ENCODE measurements at regions of chr1 and their contacts with region 1.

Region 1: GRCh38 chr1:2556277-2556677 is at the start of gene TNFRSF14:
- DNase-seq: no peak
- ATAC-seq: peak; percentile 38
- H3K4me3 ChIP-seq: peak within 1 kb of the TSS; percentile 71 to 89 (median 76)
- H3K27ac ChIP-seq: peak within 1 kb of the TSS; percentile 66
- H3K4me1 ChIP-seq: peaks cover 36% of the 10 kb centered on the region
- H3K27me3 ChIP-seq: no peaks in the 10 kb centered on the region; a peak in 1 of 5 replicates
- CTCF ChIP-seq: no peak
- EP300 ChIP-seq: no peak
- POLR2A ChIP-seq: no peak
- RAD21 ChIP-seq: no peak
- total RNA-seq, gene TNFRSF14: 6.2 and 11.9 TPM in 2 replicates

Region 2: DNA sequence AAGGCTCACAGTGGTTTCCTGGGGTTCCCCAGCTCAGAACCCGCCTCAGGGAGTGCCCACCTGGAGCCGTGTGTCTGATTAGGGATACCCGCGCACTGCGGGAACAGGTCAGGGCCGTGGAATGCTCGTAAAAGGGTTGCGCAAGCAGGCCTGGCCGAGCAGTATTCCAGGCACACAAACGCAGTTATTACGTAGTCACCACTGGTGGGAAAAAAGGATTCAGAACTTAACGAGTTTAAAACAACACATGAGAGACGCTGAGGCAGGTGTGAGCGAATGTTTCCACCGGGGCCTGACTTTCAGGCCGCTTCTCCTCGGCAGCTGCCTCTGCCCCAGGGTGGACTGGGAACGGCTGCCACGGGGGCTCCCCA is 62.0 kb before region 1 on chr1:
- CTCF ChIA-PET with region 1: no interaction called
- POLR2A ChIA-PET with region 1: no interaction called
- in situ Hi-C with region 1: no loop called
- intact Hi-C with region 1: no loop called
- DNase-seq: peak; percentile 28
- ATAC-seq: peak; percentile 17; the same call in 2 of the 3 replicates
- H3K4me3 ChIP-seq: no peak overlapping the region
- H3K27ac ChIP-seq: no peak overlapping the region
- H3K4me1 ChIP-seq: peaks cover 32% of the 10 kb centered on the region
- H3K27me3 ChIP-seq: peaks cover 41 to 79% of the 10 kb centered on the region in 2 experiments
- CTCF ChIP-seq: no peak
- EP300 ChIP-seq: no peak
- POLR2A ChIP-seq: no peak
- RAD21 ChIP-seq: no peak

Region 3: GRCh38 chr1:2545759-2546514 is 10.3 kb before region 1 on chr1:
- CTCF ChIA-PET with region 1: no interaction called
- POLR2A ChIA-PET with region 1: interaction called, 20 read pairs
- in situ Hi-C with region 1: no loop called
- intact Hi-C with region 1: no loop called
- DNase-seq: peak; percentile 87
- ATAC-seq: peak; percentile 62
- H3K4me3 ChIP-seq: peak overlapping the region; percentile 61 to 80 (median 64)
- H3K27ac ChIP-seq: peak overlapping the region; percentile 51
- H3K4me1 ChIP-seq: peaks cover 77% of the 10 kb centered on the region
- H3K27me3 ChIP-seq: peaks cover 4 to 6% of the 10 kb centered on the region in 2 experiments; a peak in 2 of 5 replicates
- CTCF ChIP-seq: no peak
- EP300 ChIP-seq: no peak
- POLR2A ChIP-seq: peak in 1 of 2 experiments; percentile 54; a peak in 2 of 4 replicates
- RAD21 ChIP-seq: no peak

Region 4: DNA sequence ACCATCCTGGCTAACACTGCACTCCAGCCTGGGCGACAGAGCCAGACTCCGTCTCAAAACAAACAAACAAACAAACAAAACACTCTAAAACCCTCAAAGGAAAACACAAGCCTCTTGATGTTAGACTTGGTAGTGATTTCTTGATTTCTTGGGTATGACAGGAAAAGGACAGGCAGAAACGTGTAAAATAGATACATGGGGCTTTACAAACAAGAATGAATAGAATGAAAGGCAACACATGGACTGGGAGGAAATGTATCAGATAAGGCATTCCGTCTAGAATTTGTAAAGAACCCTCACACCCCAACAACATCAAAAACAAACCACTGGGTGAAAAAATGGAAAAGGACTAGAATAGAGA is 22.5 kb after region 1 on chr1:
- CTCF ChIA-PET with region 1: interaction called, 3 read pairs
- POLR2A ChIA-PET with region 1: interaction called, 12 read pairs
- in situ Hi-C with region 1: no loop called
- intact Hi-C with region 1: no loop called
- DNase-seq: no peak
- ATAC-seq: no peak
- H3K4me3 ChIP-seq: no peak overlapping the region; a peak in 1 of 6 replicates
- H3K27ac ChIP-seq: peak overlapping the region; percentile 54
- H3K4me1 ChIP-seq: peaks cover 92% of the 10 kb centered on the region
- H3K27me3 ChIP-seq: no peaks in the 10 kb centered on the region
- CTCF ChIP-seq: no peak
- EP300 ChIP-seq: no peak
- POLR2A ChIP-seq: no peak
- RAD21 ChIP-seq: no peak

Region 5: GRCh38 chr1:2586154-2587070 is 30.1 kb after region 1 on chr1 and contains the start of gene PRXL2B:
- CTCF ChIA-PET with region 1: no interaction called
- POLR2A ChIA-PET with region 1: interaction called, 16 read pairs
- in situ Hi-C with region 1: no loop called
- intact Hi-C with region 1: no loop called
- DNase-seq: peak; percentile 94
- ATAC-seq: peak; percentile 90
- H3K4me3 ChIP-seq: peak within 1 kb of the TSS; percentile 79 to 95 (median 90)
- H3K27ac ChIP-seq: peak within 1 kb of the TSS; percentile 86
- H3K4me1 ChIP-seq: peaks cover 46% of the 10 kb centered on the region
- H3K27me3 ChIP-seq: no peaks in the 10 kb centered on the region
- CTCF ChIP-seq: no peak
- EP300 ChIP-seq: no peak
- POLR2A ChIP-seq: 0 out of 4 replicates have a peak, but pooled peaks of 1 of the 2 experiments have one; percentile 38
- RAD21 ChIP-seq: 0 out of 2 replicates have a peak, but pooled peaks have one; percentile 20
- total RNA-seq, gene PRXL2B: 14.1 and 16.8 TPM in 2 replicates

Region 6: GRCh38 chr1:2632561-2633361 is 76.5 kb after region 1 on chr1 and contains the start of gene MMEL1:
- CTCF ChIA-PET with region 1: no interaction called
- POLR2A ChIA-PET with region 1: interaction called, 4 read pairs
- in situ Hi-C with region 1: no loop called
- intact Hi-C with region 1: loop called (anchors 5 kb)
- DNase-seq: no peak
- ATAC-seq: peak; percentile 21; the same call in 2 of the 3 replicates
- H3K4me3 ChIP-seq: peak within 1 kb of the TSS in 1 of 3 experiments; percentile 42; a peak in 1 of 6 replicates
- H3K27ac ChIP-seq: no peak within 1 kb of the TSS
- H3K4me1 ChIP-seq: peaks cover 40% of the 10 kb centered on the region
- H3K27me3 ChIP-seq: peaks cover 11 to 24% of the 10 kb centered on the region in 2 experiments; a peak in 4 of 5 replicates
- CTCF ChIP-seq: no peak
- EP300 ChIP-seq: no peak
- POLR2A ChIP-seq: no peak
- RAD21 ChIP-seq: no peak
- total RNA-seq, gene MMEL1: not detected in 2 replicates

Measured in HepG2 (cell line).